Posterior vena cava (tissue), 2 donors: ENCODE measurements at regions of chr9 and their contacts with region 1.

Region 1: GRCh38 chr9:122381206-122381950 is 10.6 kb downstream of the PTGS1 start:
- DNase-seq: peak; percentile 61

Region 2: DNA sequence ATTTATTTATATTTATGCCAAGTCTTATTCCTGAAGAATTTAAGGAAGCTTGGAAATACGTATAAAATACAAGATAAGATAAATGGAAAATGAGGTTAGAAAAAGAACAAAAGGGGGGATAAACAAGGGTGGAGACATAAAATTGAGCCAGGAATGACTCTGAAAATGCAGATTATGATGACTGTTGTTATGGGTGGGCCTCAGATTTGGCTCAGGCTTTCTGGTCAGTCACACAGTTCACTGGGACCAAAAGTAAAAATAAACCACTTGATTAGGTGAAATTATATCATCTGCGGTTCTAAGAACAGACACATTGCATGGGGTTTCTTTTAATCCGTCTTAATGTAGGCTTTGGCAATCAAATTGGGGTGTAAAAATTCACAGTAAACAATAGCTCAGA is 45.3 kb after region 1 on chr9:
- intact Hi-C with region 1: no loop called
- DNase-seq: no peak

Region 3: DNA sequence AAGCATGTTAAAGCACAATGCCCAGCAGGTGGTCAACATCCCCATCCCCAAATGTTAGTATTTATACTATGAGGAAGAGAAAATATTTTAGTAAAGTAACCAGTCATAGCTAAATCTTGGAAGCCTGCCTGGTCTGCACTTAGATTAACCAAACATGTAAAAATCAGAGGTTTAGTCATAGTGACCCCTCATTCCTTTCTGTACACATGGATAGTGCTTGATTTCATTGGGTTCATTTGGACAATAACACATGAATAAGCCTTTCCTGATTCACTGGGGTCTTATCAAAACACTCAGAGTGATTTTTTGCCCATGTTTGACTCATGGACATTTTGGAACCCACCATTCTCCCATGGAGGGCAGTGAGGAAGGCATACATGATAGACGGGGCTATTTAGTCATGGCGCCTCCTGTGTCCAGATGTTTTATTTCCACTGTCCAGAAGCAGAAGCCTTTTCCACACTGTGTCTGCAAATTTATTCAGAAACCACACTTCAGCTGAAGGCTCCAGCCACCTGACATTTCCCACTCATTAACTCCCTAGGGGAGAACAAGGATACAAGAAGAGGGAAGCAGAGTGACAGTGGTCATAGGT is 63.9 kb after region 1 on chr9:
- intact Hi-C with region 1: loop called in 1 of 2 experiments (anchors 2 kb)
- DNase-seq: no peak